ENCODE measurements at regions of chr17 and their contacts with region 1.

Region 1: DNA sequence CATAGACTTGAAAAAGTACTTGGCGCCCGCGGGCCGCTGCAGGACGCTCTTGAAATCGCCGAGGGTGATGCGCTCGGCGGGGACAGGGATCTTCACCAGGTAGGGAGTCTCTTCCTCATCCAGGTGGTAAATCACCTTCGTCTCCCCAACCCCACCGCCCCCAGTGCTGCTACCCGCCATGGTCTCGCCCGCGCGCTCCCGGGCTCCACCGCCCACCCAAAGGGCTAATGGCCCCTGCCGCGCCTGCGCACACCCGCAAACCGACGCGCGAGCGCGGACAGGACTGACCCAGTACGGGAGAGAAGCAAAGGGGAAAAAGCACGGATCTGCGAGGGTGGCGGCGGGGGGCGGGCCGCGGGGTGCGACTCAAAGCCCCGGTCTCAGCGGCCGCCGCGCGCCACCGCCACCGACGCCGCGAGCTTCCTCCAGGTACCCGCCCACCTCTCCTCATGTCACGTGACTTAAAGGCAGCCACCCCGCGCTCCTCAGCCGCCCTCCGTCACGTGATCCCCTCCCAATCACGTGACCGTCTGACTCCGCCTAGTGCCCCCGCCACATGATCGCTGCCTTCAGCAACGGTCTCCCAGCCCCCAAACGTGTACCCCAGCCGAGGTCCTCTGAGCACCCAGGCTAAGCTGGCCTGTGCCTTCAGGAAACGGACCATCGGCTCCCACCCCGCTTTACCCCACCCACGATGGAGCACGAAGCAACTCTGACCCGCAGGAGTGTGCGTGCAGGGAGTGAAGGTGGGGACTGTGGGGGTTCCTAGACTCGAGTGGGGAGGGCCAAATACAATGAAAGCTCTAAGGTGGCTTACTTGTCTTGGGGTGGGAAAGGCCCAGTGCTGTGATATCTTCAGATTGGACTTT is at the start of gene DVL2:
- DNase-seq: peak; percentile 94
- ATAC-seq: peak; percentile 52
- H3K4me3 ChIP-seq: peak within 1 kb of the TSS; percentile 94
- H3K27ac ChIP-seq: peak within 1 kb of the TSS; percentile 92
- H3K4me1 ChIP-seq: peaks cover 5% of the 10 kb centered on the region
- H3K27me3 ChIP-seq: no peaks in the 10 kb centered on the region
- CTCF ChIP-seq: no peak
- POLR2A ChIP-seq: no peak; the same call in 1 of the 2 replicates
- RAD21 ChIP-seq: no peak
- total RNA-seq, gene DVL2: 20.3 and 21.3 TPM in 2 replicates

Region 2: DNA sequence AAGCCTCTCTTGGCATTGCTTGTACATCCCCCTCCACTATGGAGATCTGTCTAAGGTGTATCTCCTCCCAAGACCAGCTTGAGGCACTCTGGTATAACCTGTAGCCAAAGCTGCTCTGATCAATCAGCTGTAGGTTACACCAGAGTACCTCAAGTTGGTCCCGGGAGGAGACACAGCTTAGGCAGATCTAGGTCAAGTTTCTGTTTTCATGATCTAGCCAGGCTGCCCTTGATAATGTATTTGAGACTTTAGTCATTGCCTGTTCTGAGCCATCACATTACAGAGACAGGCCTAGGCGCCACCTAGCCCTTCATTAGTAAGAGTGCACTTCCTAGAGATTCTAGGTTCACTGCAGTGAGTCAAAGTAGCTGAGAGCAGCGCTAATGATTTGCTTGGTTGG is 86.5 kb before region 1 on chr17:
- CTCF ChIA-PET with region 1: no interaction called
- POLR2A ChIA-PET with region 1: no interaction called
- dilution Hi-C with region 1: no loop called
- in situ Hi-C with region 1: no loop called
- intact Hi-C with region 1: no loop called
- DNase-seq: no peak
- ATAC-seq: no peak
- H3K4me3 ChIP-seq: no peak overlapping the region
- H3K27ac ChIP-seq: no peak overlapping the region
- H3K4me1 ChIP-seq: no peaks in the 10 kb centered on the region
- H3K27me3 ChIP-seq: peaks cover 22% of the 10 kb centered on the region
- CTCF ChIP-seq: no peak
- POLR2A ChIP-seq: no peak
- RAD21 ChIP-seq: no peak

Region 3: GRCh38 chr17:7219812-7220581 is 14.3 kb before region 1 on chr17 and contains the starts of genes ACADVL and DLG4:
- CTCF ChIA-PET with region 1: interaction called, 5 read pairs
- POLR2A ChIA-PET with region 1: interaction called, 5 read pairs
- dilution Hi-C with region 1: no loop called
- in situ Hi-C with region 1: no loop called
- intact Hi-C with region 1: loop called (anchors 2 kb)
- DNase-seq: peak; percentile 86
- ATAC-seq: peak; percentile 71
- H3K4me3 ChIP-seq: peak within 1 kb of the TSS; percentile 66
- H3K27ac ChIP-seq: peak within 1 kb of the TSS; percentile 77
- H3K4me1 ChIP-seq: peaks cover 24% of the 10 kb centered on the region
- H3K27me3 ChIP-seq: no peaks in the 10 kb centered on the region
- CTCF ChIP-seq: no peak
- POLR2A ChIP-seq: peak; percentile 95
- RAD21 ChIP-seq: no peak
- total RNA-seq, gene ACADVL: 129 and 139 TPM in 2 replicates
- total RNA-seq, gene DLG4: 8.1 and 8.2 TPM in 2 replicates

Region 4: DNA sequence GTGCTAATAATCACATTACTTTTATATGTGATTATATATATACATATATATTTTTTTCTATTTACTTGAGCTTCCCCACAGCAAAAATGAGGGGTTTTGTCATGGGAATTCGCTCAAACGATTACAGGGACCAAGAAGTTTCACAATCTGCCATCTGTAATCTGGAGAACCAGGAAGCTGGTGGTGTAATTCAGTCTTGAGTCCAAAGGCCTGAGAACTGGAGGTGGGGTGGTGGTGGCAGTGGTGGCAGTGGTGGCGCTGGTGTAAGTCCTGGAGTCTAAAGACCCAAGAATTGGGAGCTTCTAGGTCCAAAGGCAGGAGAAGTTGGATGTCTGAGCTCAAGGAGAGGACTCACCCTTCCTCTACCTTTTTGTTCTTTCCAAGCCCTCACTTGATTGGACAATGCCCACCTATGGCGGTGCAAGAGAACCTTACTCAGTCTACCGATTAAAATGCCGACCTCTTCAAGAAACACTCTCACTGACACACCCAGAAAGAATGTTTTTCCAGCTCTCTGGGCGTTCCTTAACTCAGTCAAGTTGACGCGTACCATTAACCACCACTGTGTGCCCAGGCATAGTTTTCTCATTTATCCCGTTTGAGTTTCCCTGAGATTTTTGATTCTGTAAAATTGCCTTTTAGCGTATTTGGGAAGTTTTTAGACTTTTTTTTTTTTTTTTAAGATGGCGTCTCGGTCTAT is 281.7 kb after region 1 on chr17:
- CTCF ChIA-PET with region 1: no interaction called
- POLR2A ChIA-PET with region 1: no interaction called
- dilution Hi-C with region 1: no loop called
- in situ Hi-C with region 1: no loop called
- intact Hi-C with region 1: no loop called
- DNase-seq: no peak
- ATAC-seq: no peak
- H3K4me3 ChIP-seq: no peak overlapping the region
- H3K27ac ChIP-seq: no peak overlapping the region
- H3K4me1 ChIP-seq: 0 out of 2 replicates have a peak, but pooled peaks cover 1% of the 10 kb centered on the region
- H3K27me3 ChIP-seq: no peaks in the 10 kb centered on the region
- CTCF ChIP-seq: no peak
- POLR2A ChIP-seq: no peak
- RAD21 ChIP-seq: no peak

Measured in IMR-90 (cell line).